Gastrocnemius medialis (tissue), 4 donors: ENCODE measurements at regions of chr20 and their contacts with region 1.

Region 1: DNA sequence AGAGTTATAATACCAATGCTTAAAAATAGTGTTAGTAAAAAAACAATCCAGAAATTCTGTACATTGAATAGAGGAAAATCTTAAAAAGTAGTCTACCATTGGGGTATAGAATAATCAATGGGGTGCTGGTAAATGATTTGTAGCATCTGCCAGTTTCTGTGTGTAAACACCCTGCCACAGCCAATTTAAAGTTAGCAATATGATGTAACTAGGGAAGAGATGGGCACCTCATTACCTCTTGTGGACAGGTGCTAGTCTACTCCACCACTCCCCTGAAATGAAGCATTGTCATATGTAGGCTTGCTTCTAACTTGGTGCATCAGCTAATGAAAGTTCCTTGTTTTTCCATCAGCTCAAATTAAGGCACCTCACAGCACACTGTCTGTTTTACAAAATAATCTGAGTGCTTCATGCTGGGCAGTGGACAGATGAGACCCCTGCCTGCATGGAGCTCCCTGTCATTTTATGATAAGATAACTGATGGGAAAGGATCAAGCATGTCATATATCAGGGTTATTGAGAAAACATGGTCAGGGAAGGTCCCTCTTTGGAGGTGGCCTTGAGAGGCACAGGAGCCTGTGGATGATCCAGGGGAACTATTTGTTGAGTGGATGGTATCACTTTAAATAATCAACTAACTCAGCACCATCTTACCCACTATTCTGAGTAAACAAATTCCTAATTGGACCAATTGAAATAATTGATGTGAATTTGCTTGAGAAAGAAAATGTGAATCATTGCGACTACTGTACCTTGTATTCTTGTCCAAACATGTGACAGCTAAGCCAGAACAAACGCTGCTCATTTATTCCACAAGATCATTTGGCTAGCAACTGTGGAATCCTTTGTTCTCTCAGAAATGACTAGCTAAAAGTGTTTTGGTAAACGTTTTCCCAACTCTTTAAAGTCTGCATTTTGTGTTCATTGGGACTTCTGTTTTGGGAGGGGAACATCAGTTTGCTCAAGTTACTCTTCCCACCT is 45.9 kb upstream of the CSE1L start:
- DNase-seq: no peak
- ATAC-seq: no peak
- H3K4me3 ChIP-seq: no peak overlapping the region
- H3K27ac ChIP-seq: no peak overlapping the region
- H3K4me1 ChIP-seq: no peaks in the 10 kb centered on the region
- H3K27me3 ChIP-seq: no peaks in the 10 kb centered on the region
- CTCF ChIP-seq: no peak
- POLR2A ChIP-seq: no peak

Region 2: DNA sequence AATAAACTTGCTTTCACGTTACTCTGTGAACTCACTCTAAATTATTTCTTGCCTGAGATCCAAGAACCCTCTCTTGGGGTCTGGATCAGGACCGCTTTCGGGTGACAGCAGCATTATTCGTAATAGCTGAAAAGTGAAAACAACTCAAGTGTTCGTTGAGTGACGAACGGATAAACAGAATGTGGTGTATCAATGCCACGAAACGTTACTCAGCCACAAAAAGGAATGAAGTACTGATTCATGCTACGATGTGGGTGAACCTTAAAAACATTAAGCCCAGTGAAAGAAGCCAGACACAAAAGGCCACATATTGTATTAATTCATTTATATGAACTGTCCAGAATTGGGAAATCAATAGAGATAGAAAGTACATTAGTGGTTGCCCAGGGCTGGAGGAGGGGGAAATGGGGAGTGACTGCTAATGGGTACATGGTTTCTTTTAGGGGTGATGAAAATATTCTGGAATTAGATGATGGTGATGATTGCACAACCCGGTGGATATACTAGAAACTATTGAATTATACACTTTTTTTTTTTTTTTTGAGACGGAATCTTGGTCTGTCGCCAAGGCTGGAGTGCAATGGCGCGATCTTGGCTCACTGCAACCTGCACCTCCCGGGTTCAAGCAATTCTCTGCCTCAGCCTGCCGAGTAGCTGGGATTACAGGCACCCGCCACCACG is 559.4 kb after region 1 on chr20:
- in situ Hi-C with region 1: no loop called
- intact Hi-C with region 1: loop called (anchors 10 kb)
- DNase-seq: no peak
- ATAC-seq: peak; percentile 30 to 47
- H3K4me3 ChIP-seq: no peak overlapping the region
- H3K27ac ChIP-seq: no peak overlapping the region
- H3K4me1 ChIP-seq: peaks cover 7 to 14% of the 10 kb centered on the region in 2 donors
- H3K27me3 ChIP-seq: no peaks in the 10 kb centered on the region
- CTCF ChIP-seq: no peak
- POLR2A ChIP-seq: no peak

Region 3: GRCh38 chr20:50070991-50071888 is 1071.1 kb after region 1 on chr20:
- in situ Hi-C with region 1: no loop called
- intact Hi-C with region 1: no loop called
- DNase-seq: peak; percentile 60 to 79
- ATAC-seq: peak; percentile 88 to 92
- H3K4me3 ChIP-seq: peak overlapping the region in 3 of 4 donors; percentile 41 to 62 (median 44)
- H3K27ac ChIP-seq: no peak overlapping the region
- H3K4me1 ChIP-seq: peaks cover 5 to 9% of the 10 kb centered on the region in 2 donors
- H3K27me3 ChIP-seq: no peaks in the 10 kb centered on the region
- CTCF ChIP-seq: peak; percentile 99 to 100 (median 99)
- POLR2A ChIP-seq: no peak